GM12878 (cell line): ENCODE measurements at regions of chr19 and their contacts with region 1.

Region 1: DNA sequence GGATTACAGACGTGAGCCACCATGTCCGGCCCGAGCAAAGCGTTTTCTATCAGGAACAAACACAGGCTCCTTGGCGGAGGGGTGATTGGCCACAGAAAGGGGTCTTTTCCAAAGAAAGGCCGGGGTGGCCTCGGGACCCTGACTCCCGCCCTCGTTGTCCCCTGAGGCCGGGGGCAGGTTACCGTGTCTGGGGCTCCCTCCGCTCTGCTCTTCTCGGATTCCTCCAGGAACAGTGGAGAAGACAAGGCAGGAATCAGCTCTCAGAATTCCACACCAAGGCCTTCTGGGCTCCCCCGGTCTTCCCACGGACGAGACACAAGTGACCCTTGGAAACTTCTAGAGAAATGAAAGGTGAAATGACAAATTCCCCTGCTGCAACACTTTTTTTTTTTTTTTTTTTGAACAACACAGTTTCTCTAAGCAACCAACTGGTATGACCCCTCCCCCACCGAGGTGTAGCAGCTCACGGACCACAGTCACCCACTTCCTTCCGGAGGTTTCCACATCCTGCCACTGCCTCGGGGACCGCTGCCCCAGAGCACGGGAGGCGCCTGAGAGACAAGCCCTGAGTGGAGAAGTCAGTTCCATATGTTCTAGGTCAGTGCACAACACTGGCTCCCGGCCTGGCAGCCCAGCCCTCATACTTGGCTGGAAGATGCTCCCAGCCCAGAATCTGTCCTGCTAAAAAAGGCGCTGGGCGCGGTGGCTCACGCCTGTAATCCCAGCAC is 11.0 kb downstream of the MOB3A start:
- DNase-seq: peak; percentile 96
- ATAC-seq: peak; percentile 47
- H3K4me3 ChIP-seq: peak overlapping the region; percentile 95
- H3K27ac ChIP-seq: peak overlapping the region; percentile 93
- H3K4me1 ChIP-seq: peaks cover 43% of the 10 kb centered on the region
- H3K27me3 ChIP-seq: no peaks in the 10 kb centered on the region
- CTCF ChIP-seq: no peak
- EP300 ChIP-seq: peak; percentile 92 to 99
- POLR2A ChIP-seq: peak; percentile 93
- RAD21 ChIP-seq: 0 out of 2 replicates have a peak, but pooled peaks have one; percentile 7

Region 2: GRCh38 chr19:2016041-2016807 is 68.9 kb before region 1 on chr19:
- CTCF ChIA-PET with region 1: interaction called, 3 read pairs
- POLR2A ChIA-PET with region 1: no interaction called
- RAD21 ChIA-PET with region 1: interaction called, 4 read pairs
- SMC1A ChIA-PET with region 1: no interaction called
- in situ Hi-C with region 1: loop called (anchors 5 kb)
- intact Hi-C with region 1: loop called (anchors 5 kb)
- DNase-seq: peak; percentile 46
- ATAC-seq: peak; percentile 82
- H3K4me3 ChIP-seq: peak overlapping the region; percentile 48
- H3K27ac ChIP-seq: no peak overlapping the region
- H3K4me1 ChIP-seq: peaks cover 9% of the 10 kb centered on the region
- H3K27me3 ChIP-seq: no peaks in the 10 kb centered on the region
- CTCF ChIP-seq: no peak
- EP300 ChIP-seq: no peak
- POLR2A ChIP-seq: no peak
- RAD21 ChIP-seq: no peak

Region 3: GRCh38 chr19:2061495-2062381 is 23.4 kb before region 1 on chr19:
- CTCF ChIA-PET with region 1: interaction called, 3 read pairs
- POLR2A ChIA-PET with region 1: interaction called, 110 read pairs
- RAD21 ChIA-PET with region 1: interaction called, 3 read pairs
- SMC1A ChIA-PET with region 1: interaction called, 7 read pairs
- in situ Hi-C with region 1: no loop called
- intact Hi-C with region 1: no loop called
- DNase-seq: peak; percentile 86
- ATAC-seq: peak; percentile 91
- H3K4me3 ChIP-seq: peak overlapping the region; percentile 94
- H3K27ac ChIP-seq: peak overlapping the region; percentile 98
- H3K4me1 ChIP-seq: peaks cover 22% of the 10 kb centered on the region
- H3K27me3 ChIP-seq: no peaks in the 10 kb centered on the region
- CTCF ChIP-seq: peak in 2 of 3 experiments; percentile 20 to 51; a peak in 4 of 6 replicates
- EP300 ChIP-seq: peak; percentile 14 to 25; a peak in 1 of 4 replicates
- POLR2A ChIP-seq: peak; percentile 88
- RAD21 ChIP-seq: peak; percentile 31; the same call in 1 of the 2 replicates

Region 4: GRCh38 chr19:2096480-2097329 is 11.5 kb after region 1 on chr19 and contains the start of gene IZUMO4:
- CTCF ChIA-PET with region 1: interaction called, 6 read pairs
- POLR2A ChIA-PET with region 1: interaction called, 60 read pairs
- RAD21 ChIA-PET with region 1: interaction called, 31 read pairs
- SMC1A ChIA-PET with region 1: interaction called, 43 read pairs
- in situ Hi-C with region 1: no loop called
- intact Hi-C with region 1: loop called (anchors 1 kb)
- DNase-seq: peak; percentile 71
- ATAC-seq: peak; percentile 83
- H3K4me3 ChIP-seq: peak within 1 kb of the TSS; percentile 93
- H3K27ac ChIP-seq: peak within 1 kb of the TSS; percentile 93
- H3K4me1 ChIP-seq: peaks cover 21% of the 10 kb centered on the region
- H3K27me3 ChIP-seq: no peaks in the 10 kb centered on the region
- CTCF ChIP-seq: peak; percentile 41 to 73 (median 54)
- EP300 ChIP-seq: no peak
- POLR2A ChIP-seq: no peak; the same call in 1 of the 2 replicates
- RAD21 ChIP-seq: no peak
- polyA plus RNA-seq, gene IZUMO4: 0.53 to 1.9 TPM

Region 5: GRCh38 chr19:2168619-2169424 is 83.7 kb after region 1 on chr19:
- CTCF ChIA-PET with region 1: interaction called, 3 read pairs
- POLR2A ChIA-PET with region 1: interaction called, 15 read pairs
- RAD21 ChIA-PET with region 1: interaction called, 8 read pairs
- SMC1A ChIA-PET with region 1: interaction called, 4 read pairs
- in situ Hi-C with region 1: no loop called
- intact Hi-C with region 1: loop called (anchors 5 kb)
- DNase-seq: peak; percentile 92
- ATAC-seq: peak; percentile 70
- H3K4me3 ChIP-seq: peak overlapping the region; percentile 92; the same call in 1 of the 2 replicates
- H3K27ac ChIP-seq: peak overlapping the region; percentile 74
- H3K4me1 ChIP-seq: peaks cover 49% of the 10 kb centered on the region
- H3K27me3 ChIP-seq: no peaks in the 10 kb centered on the region
- CTCF ChIP-seq: 0 out of 6 replicates have a peak, but pooled peaks of 1 of the 3 experiments have one; percentile 14
- EP300 ChIP-seq: peak; percentile 52 to 75; a peak in 2 of 4 replicates
- POLR2A ChIP-seq: peak; percentile 59; the same call in 1 of the 2 replicates
- RAD21 ChIP-seq: no peak